PC-9 (cell line): ENCODE measurements at regions of chr11 and their contacts with region 1.

Region 1: GRCh38 chr11:119196833-119197483 is 9.2 kb upstream of the CBL start:
- DNase-seq: peak; percentile 69 to 88
- H3K4me3 ChIP-seq: no peak overlapping the region
- H3K27ac ChIP-seq: no peak overlapping the region
- H3K4me1 ChIP-seq: peaks cover 14% of the 10 kb centered on the region
- H3K27me3 ChIP-seq: no peaks in the 10 kb centered on the region
- CTCF ChIP-seq: peak; percentile 95

Region 2: GRCh38 chr11:119018074-119018938 is 178.7 kb before region 1 on chr11 and contains the starts of genes RPS25 and TRAPPC4:
- CTCF ChIA-PET with region 1: no interaction called
- POLR2A ChIA-PET with region 1: no interaction called
- intact Hi-C with region 1: loop called (anchors 5 kb)
- DNase-seq: peak; percentile 89 to 96
- H3K4me3 ChIP-seq: peak within 1 kb of the TSS; percentile 98
- H3K27ac ChIP-seq: peak within 1 kb of the TSS; percentile 78
- H3K4me1 ChIP-seq: peaks cover 36% of the 10 kb centered on the region
- H3K27me3 ChIP-seq: no peaks in the 10 kb centered on the region
- CTCF ChIP-seq: no peak
- total RNA-seq, gene RPS25: 954 and 984 TPM in 2 replicates
- total RNA-seq, gene TRAPPC4: 49.2 and 51.4 TPM in 2 replicates

Region 3: DNA sequence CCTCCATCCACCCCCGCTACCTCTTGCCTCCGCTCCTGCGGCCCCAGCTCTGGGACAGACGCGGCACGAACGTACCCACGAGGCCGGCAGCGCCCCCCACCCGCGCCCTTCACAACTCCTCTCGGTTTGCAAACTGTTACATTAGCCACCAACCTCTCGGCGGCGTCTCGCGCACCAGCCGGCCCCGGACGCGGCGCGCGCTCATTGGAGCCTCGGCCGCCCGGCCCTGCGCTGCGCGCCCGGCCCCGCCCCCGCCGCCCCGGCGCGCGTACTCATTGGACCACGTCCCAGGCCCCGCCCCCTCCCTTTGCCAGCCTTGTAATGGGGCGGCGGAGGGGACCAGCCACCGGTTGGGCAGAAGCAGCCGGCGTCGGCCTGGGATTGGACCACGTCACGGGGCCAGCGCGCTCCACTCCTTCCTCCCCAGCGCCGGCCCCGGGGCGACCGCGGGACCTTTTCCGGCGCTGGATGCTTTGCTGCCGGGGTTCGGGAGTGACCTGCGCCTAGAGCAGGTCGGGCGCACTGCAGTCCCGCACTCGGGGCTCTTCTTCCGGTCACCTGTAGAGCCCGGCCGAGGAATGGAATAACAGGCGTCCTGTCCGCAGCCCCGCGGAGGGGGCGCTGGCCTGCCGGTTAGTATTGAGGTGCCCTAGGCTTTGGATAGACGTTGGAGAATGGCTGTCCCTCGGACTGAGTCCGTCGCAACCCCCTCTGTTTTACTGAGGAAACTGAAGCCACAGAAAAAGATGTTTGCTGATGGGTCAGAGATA is 139.8 kb before region 1 on chr11 and contains the start of gene HYOU1:
- CTCF ChIA-PET with region 1: no interaction called
- POLR2A ChIA-PET with region 1: no interaction called
- intact Hi-C with region 1: loop called (anchors 2 kb)
- DNase-seq: peak; percentile 94 to 98
- H3K4me3 ChIP-seq: peak within 1 kb of the TSS; percentile 90
- H3K27ac ChIP-seq: peak within 1 kb of the TSS; percentile 95
- H3K4me1 ChIP-seq: peaks cover 14% of the 10 kb centered on the region
- H3K27me3 ChIP-seq: no peaks in the 10 kb centered on the region
- CTCF ChIP-seq: peak; percentile 41; the same call in 1 of the 2 replicates
- total RNA-seq, gene HYOU1: 92.0 and 117 TPM in 2 replicates

Region 4: DNA sequence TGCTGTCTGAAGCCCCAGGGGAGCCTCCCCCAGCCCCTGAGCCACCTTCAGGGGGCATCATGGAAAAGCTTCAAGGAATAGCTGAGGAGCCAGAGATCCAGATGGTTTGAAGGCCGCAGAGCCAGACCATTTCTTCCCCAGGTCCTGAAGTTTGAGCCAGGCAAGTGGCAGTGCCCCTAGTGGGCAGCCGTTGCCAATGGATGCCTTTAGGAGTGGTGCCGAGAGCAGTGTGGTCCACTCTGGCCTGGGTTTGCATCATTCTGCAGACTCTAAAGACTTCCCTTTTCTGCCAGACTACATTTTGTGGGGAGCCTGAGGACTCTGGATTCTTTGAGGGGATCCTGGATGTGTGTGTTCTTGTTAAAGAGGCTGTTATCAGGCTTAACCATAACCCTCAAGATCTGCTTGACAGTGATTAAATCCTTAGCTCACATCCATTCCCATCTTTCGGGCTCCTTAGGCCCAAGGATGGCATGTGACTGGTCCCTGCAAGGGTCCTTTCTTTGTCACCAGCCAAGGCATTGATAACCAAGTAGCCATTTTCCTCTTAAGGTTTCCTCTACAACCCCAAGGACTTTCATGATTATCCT is 62.5 kb before region 1 on chr11:
- CTCF ChIA-PET with region 1: no interaction called
- POLR2A ChIA-PET with region 1: interaction called, 29 read pairs
- intact Hi-C with region 1: no loop called
- DNase-seq: no peak
- H3K4me3 ChIP-seq: no peak overlapping the region
- H3K27ac ChIP-seq: no peak overlapping the region
- H3K4me1 ChIP-seq: no peaks in the 10 kb centered on the region
- H3K27me3 ChIP-seq: no peaks in the 10 kb centered on the region
- CTCF ChIP-seq: peak; percentile 78

Region 5: DNA sequence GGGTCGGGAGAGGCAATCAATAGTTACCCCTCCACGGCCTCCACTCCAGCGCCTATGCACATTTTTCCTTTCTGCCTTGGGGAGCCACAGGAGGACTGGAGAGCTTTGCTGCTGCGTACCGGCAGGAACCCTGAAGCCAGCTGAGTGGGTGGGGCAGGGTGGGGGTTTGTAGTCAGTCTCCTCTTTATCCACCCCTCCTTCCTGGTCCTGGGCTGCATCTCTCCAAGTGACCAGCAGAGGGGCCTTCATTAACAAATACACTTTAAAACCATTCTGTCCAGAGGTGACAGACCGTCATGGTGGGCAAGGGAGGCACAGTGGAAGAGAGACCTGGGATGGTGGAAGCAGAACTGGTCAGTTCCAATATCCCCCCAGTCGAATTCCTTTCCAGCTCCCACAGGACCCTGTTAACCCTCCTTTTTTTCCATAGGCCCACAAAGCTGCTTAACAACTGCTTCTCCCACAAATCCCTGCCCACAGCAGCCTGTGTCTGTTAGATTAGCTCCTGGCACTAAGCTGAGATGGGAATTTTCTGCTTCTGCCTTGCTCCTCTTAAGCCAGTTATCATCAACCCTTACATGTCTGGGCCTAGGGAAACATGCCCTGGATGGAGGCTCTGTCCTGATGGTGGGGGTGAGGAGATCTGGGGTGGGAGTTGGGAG is 52.0 kb before region 1 on chr11:
- CTCF ChIA-PET with region 1: interaction called, 6 read pairs
- POLR2A ChIA-PET with region 1: no interaction called
- intact Hi-C with region 1: loop called (anchors 1 kb)
- DNase-seq: peak; percentile 63 to 73
- H3K4me3 ChIP-seq: no peak overlapping the region
- H3K27ac ChIP-seq: no peak overlapping the region
- H3K4me1 ChIP-seq: peaks cover 9% of the 10 kb centered on the region; the same call in 1 of the 2 replicates
- H3K27me3 ChIP-seq: peaks cover 24% of the 10 kb centered on the region
- CTCF ChIP-seq: peak; percentile 78

Region 6: DNA sequence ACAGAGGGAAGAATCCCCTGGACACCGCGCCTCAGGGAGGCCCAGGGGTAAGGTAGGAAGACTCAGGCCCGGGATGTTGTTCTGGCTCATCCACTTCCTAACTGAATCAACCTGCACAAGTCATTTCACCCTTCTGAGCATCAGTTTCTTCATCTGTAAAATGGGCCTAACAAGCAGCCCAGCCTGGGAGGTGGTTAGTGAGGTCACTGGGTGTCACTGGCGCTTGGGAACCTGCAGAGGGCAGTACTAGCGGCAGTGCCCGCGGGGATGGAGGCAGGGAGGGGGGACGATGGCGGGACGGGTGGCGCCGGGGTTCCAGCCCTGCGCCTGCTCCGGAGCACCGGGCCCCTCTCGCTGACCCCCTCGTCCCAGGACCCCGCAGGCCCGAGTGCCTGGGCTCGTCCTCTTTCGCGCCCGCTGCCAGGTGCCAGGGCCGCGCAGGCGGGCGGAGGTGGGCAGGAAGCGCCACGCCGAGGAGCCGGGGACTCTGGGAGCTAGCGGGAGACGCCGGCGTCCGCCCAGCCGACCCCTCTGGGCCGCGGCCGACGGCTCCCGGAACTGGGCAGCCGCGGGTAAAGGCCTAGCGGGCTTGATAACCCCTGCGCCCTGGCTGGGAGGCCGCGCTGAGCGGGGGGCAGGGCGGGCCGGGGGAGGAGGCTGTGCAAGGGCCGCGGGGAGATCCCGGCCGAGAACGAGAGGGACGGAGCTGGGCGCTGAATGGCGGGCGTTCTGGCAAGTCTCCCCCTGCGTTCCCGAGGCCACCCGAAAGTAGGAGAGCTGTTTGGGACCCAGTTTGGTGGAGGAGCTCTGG is 28.3 kb before region 1 on chr11 and contains the start of gene NLRX1:
- CTCF ChIA-PET with region 1: interaction called, 5 read pairs
- POLR2A ChIA-PET with region 1: no interaction called
- intact Hi-C with region 1: loop called (anchors 2 kb)
- DNase-seq: peak; percentile 67 to 80
- H3K4me3 ChIP-seq: peak within 1 kb of the TSS; percentile 69
- H3K27ac ChIP-seq: peak within 1 kb of the TSS; percentile 81
- H3K4me1 ChIP-seq: peaks cover 33% of the 10 kb centered on the region
- H3K27me3 ChIP-seq: no peaks in the 10 kb centered on the region
- CTCF ChIP-seq: peak; percentile 92
- total RNA-seq, gene NLRX1: 18.4 and 22.5 TPM in 2 replicates

Region 7: GRCh38 chr11:119356349-119357031 is 159.5 kb after region 1 on chr11:
- CTCF ChIA-PET with region 1: interaction called, 17 read pairs
- POLR2A ChIA-PET with region 1: no interaction called
- intact Hi-C with region 1: no loop called
- DNase-seq: peak; percentile 61 to 65
- H3K4me3 ChIP-seq: peak overlapping the region; percentile 71
- H3K27ac ChIP-seq: no peak overlapping the region
- H3K4me1 ChIP-seq: peaks cover 20% of the 10 kb centered on the region
- H3K27me3 ChIP-seq: no peaks in the 10 kb centered on the region
- CTCF ChIP-seq: peak; percentile 100